ENCODE measurements at regions of chr5 and their contacts with region 1.

Region 1: DNA sequence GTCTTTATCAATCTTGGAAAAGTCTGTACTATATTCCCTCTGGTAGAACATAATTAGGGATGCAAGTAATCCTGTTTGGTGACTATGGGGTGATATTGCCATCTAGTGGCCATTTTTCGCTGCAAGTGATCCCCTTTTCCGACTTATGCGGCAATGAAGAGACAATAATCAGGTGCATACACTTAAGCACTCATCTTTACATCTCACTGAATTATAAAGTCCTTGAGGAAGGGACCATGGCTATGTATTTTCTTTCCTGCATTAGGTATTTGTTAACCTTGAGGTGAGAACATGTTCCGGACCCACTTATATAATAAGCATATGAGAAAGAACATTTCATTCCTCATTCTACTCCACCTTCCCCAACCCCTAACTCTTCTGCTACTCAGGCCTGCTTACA is 19.6 kb upstream of the LIX1 start:
- DNase-seq: no peak
- ATAC-seq: peak; percentile 71 to 85
- H3K4me3 ChIP-seq: no peak overlapping the region
- H3K27ac ChIP-seq: no peak overlapping the region
- H3K4me1 ChIP-seq: no peaks in the 10 kb centered on the region
- H3K27me3 ChIP-seq: no peaks in the 10 kb centered on the region
- CTCF ChIP-seq: peak; percentile 84

Region 2: GRCh38 chr5:96876292-96876850 is 285.7 kb before region 1 on chr5 and contains the start of gene ERAP2:
- intact Hi-C with region 1: loop called (anchors 10 kb)
- DNase-seq: no peak
- ATAC-seq: peak; percentile 64 to 86
- H3K4me3 ChIP-seq: peak within 1 kb of the TSS; percentile 70
- H3K27ac ChIP-seq: peak within 1 kb of the TSS; percentile 87
- H3K4me1 ChIP-seq: peaks cover 37% of the 10 kb centered on the region
- H3K27me3 ChIP-seq: no peaks in the 10 kb centered on the region
- CTCF ChIP-seq: no peak
- total RNA-seq, gene ERAP2: 32.1 TPM

Region 3: DNA sequence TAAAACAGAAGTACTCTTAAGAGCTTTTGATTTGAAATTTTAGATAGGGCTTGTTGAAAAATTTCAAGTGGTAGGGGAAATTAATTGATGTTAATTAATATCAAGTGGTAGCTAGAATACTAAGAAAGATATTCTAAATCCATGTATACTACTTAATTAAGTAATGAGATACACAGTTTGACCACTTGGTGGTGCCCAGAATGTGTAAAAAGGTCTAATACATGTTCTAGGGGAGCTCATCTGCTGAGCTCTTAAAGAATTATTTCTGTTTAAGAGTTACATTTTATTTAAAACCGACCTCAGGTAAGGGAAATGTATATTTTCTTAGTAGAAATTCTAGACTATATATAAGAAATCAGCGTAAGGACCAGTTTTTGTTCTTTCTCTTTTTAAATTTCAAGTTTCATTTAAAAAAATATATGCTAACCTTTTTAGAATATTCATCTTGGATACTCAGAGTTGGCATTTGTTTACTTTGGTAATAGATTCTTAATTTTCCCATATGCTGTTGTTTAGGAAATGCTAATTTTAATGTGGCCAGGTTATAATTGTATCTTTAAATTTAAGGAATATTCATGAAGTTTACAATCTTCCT is 164.7 kb before region 1 on chr5:
- intact Hi-C with region 1: loop called (anchors 5 kb)
- DNase-seq: no peak
- ATAC-seq: peak in 1 of 2 donors; percentile 60
- H3K4me3 ChIP-seq: no peak overlapping the region
- H3K27ac ChIP-seq: no peak overlapping the region
- H3K4me1 ChIP-seq: no peaks in the 10 kb centered on the region
- H3K27me3 ChIP-seq: no peaks in the 10 kb centered on the region
- CTCF ChIP-seq: peak; percentile 46

Region 4: GRCh38 chr5:98248949-98249348 is 1086.9 kb after region 1 on chr5:
- intact Hi-C with region 1: no loop called
- DNase-seq: no peak
- ATAC-seq: no peak
- H3K4me3 ChIP-seq: no peak overlapping the region
- H3K27ac ChIP-seq: no peak overlapping the region
- H3K4me1 ChIP-seq: no peaks in the 10 kb centered on the region
- H3K27me3 ChIP-seq: no peaks in the 10 kb centered on the region
- CTCF ChIP-seq: no peak